Activated CD8-positive, alpha-beta T cell treated with anti-CD3 and anti-CD28 coated beads, Interleukin-2, amount 10 ng/mL, durations not matched to agents 7 days and 5 days (primary cell): ENCODE measurements at regions of chr12 and their contacts with region 1.

Region 1: GRCh38 chr12:6937481-6938297 is 5.9 kb upstream of the RNU7-1 start:
- DNase-seq: peak; percentile 96
- ATAC-seq: peak; percentile 93
- H3K4me3 Mint-ChIP-seq: peak overlapping the region; percentile 82
- H3K27ac Mint-ChIP-seq: peak overlapping the region; percentile 97
- H3K4me1 Mint-ChIP-seq: peaks cover 62% of the 10 kb centered on the region
- H3K27me3 Mint-ChIP-seq: no peaks in the 10 kb centered on the region

Region 2: DNA sequence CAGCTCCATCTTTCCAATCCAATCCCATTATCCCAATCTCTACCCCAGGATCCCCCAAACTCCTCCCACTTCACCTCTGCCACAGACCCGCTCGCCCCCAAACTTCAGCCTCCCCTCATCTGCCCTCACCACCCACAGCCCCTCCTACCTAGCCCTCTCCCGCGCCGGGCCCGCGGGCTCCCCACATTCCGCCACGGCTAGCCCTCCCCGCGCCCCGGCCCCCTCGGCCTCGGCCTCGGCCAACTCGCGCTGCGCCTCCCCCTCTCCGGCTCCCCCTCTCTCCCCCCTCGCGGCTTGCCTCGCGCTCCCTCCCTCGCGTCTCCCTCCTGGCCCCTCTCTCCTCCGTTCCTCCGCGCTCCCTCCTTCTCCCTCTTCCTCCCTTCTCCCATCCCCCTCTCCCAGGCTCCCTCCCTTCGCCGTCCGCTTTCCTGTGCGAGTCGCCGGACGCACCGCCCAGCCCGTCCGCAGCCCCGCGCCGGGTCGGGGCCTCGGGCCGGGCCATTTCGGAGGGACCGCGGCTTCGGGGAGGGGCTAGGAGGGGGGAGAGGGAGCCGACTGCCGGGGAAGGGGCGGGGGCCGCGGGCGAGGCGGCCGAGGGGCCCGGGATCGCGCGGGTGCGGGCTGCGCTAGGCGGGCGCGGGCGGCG is 10.2 kb before region 1 on chr12 and contains the start of gene ATN1:
- CTCF ChIA-PET with region 1: interaction called, 106 read pairs
- POLR2A ChIA-PET with region 1: interaction called, 94 read pairs
- DNase-seq: peak; percentile 51
- ATAC-seq: peak; percentile 34
- H3K4me3 Mint-ChIP-seq: peak within 1 kb of the TSS; percentile 78
- H3K27ac Mint-ChIP-seq: peak within 1 kb of the TSS; percentile 53
- H3K4me1 Mint-ChIP-seq: peaks cover 68% of the 10 kb centered on the region
- H3K27me3 Mint-ChIP-seq: no peaks in the 10 kb centered on the region
- total RNA-seq, gene ATN1: 21.6 to 24.5 TPM

Region 3: GRCh38 chr12:6953442-6954315 is 16.0 kb after region 1 on chr12:
- CTCF ChIA-PET with region 1: interaction called, 742 read pairs
- POLR2A ChIA-PET with region 1: interaction called, 1,099 read pairs
- DNase-seq: peak; percentile 91
- ATAC-seq: peak; percentile 40
- H3K4me3 Mint-ChIP-seq: peak overlapping the region; percentile 99
- H3K27ac Mint-ChIP-seq: peak overlapping the region; percentile 98
- H3K4me1 Mint-ChIP-seq: peaks cover 71% of the 10 kb centered on the region
- H3K27me3 Mint-ChIP-seq: no peaks in the 10 kb centered on the region

Region 4: DNA sequence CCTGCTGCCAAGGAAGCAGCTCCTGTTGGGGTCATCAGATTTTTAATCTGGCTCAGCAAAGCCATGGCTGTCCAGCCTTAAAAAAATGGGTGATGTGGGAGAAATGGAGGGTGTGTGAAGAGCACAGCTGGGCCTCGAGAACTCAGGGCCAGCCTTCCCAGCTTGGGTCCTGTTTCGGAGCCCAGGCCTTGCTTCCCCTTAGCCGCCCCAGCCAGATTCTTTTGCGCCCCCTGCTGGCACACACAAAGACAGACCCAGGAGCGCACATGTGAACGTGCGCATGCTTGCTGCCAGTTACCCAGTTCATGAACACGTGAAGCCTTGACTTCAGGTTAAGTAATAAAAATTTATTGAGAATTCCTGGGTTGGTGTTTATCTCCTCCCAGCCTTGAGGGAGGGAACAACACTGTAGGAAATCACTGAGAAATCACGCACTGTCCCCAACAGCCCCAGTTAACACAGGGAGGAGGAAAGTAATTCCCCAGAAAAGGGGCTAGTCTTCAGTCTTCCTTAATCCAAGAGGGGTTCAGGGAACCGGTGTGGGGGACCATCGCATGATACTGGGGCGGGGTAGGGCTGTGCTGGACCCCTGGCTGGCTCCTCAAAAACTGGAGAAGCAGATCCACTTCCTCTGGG is 27.5 kb after region 1 on chr12:
- CTCF ChIA-PET with region 1: interaction called, 742 read pairs
- POLR2A ChIA-PET with region 1: interaction called, 1,099 read pairs
- DNase-seq: peak; percentile 93
- ATAC-seq: peak; percentile 65
- H3K4me3 Mint-ChIP-seq: peak overlapping the region; percentile 12
- H3K27ac Mint-ChIP-seq: peak overlapping the region; percentile 77
- H3K4me1 Mint-ChIP-seq: peaks cover 75% of the 10 kb centered on the region
- H3K27me3 Mint-ChIP-seq: no peaks in the 10 kb centered on the region

Region 5: DNA sequence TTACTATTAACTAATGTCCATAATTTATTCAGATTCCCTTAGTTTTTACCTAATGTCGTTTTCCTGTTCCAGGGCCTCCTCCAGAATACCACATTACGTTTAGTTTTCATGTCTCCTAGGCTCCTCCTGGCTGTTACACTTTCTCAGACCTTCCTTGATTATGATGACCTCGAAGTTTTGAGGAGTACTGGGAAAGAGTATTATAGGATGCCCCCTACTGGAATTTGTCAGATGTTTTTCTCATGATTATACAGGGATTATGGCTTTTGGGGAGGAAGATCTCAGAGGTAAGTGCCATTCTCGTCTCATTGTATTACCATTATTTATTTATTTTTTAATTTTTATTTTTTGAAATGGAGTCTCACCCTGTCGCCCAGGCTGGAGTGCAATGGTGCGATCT is 105.2 kb after region 1 on chr12:
- CTCF ChIA-PET with region 1: no interaction called
- POLR2A ChIA-PET with region 1: no interaction called
- DNase-seq: no peak
- ATAC-seq: no peak
- H3K4me3 Mint-ChIP-seq: no peak overlapping the region
- H3K27ac Mint-ChIP-seq: no peak overlapping the region
- H3K4me1 Mint-ChIP-seq: peaks cover 18% of the 10 kb centered on the region
- H3K27me3 Mint-ChIP-seq: peaks cover 4% of the 10 kb centered on the region